ENCODE measurements at regions of chr6 and their contacts with region 1.

Region 1: GRCh38 chr6:158026054-158026900 is 44.6 kb downstream of the SYNJ2 start:
- DNase-seq: peak; percentile 64 to 92 (median 80)
- ATAC-seq: peak; percentile 77
- H3K4me3 ChIP-seq: peak overlapping the region; percentile 24 to 42
- H3K4me3 Mint-ChIP-seq: peak overlapping the region; percentile 81
- H3K27ac ChIP-seq: peak overlapping the region; percentile 65 to 91
- H3K27ac Mint-ChIP-seq: peak overlapping the region; percentile 97
- H3K4me1 ChIP-seq: peaks cover 27% of the 10 kb centered on the region
- H3K4me1 Mint-ChIP-seq: peaks cover 36% of the 10 kb centered on the region
- H3K27me3 ChIP-seq: no peaks in the 10 kb centered on the region
- H3K27me3 Mint-ChIP-seq: no peaks in the 10 kb centered on the region
- CTCF ChIP-seq: peak; percentile 75

Region 2: GRCh38 chr6:157764178-157765033 is 261.9 kb before region 1 on chr6:
- CTCF ChIA-PET with region 1: no interaction called
- POLR2A ChIA-PET with region 1: no interaction called
- intact Hi-C with region 1: loop called (anchors 1 to 5 kb)
- DNase-seq: peak; percentile 57 to 93 (median 80)
- ATAC-seq: peak; percentile 51
- H3K4me3 ChIP-seq: peak overlapping the region; percentile 10 to 23
- H3K4me3 Mint-ChIP-seq: peak overlapping the region; percentile 74
- H3K27ac ChIP-seq: peak overlapping the region; percentile 27 to 61
- H3K27ac Mint-ChIP-seq: peak overlapping the region; percentile 95
- H3K4me1 ChIP-seq: peaks cover 69% of the 10 kb centered on the region
- H3K4me1 Mint-ChIP-seq: peaks cover 73% of the 10 kb centered on the region
- H3K27me3 ChIP-seq: no peaks in the 10 kb centered on the region
- H3K27me3 Mint-ChIP-seq: no peaks in the 10 kb centered on the region
- CTCF ChIP-seq: no peak

Region 3: DNA sequence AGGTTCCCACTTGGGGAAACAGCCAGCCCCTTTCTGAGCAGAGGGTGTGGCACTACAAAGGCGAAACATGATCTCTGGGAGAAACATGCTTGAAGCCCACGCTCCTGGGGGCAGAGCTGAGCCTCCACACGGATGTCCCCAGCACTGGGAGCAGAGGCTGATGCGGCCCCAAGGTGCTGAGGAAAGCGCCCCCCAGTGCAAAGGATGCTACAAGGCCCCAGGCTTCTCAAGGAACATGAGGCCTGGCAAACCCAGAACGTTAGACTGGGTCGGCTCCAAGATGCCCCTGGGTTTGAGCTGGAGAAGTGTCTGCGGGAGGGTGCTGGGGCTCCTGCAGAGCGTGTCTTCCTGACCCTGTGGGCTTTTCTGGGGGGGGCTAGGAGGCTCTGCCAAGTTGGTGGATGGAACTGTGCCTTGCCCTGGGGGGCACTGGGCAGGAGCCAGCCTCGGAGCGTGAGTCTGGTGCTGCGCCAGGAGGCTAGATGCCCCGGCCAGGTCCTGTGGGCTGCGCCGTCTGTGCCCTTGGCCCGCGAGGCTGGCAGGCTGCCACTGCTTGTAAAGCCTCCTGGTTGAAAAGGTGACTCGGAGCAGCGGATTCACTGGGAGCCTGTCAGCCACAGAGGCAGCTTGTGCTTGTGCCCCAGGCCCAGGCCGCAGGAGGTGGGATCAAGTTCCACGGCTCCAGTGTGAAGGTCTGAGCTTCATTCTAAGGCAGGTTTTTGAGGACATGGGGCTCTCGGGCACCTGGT is 36.6 kb before region 1 on chr6:
- CTCF ChIA-PET with region 1: interaction called, 23 read pairs
- POLR2A ChIA-PET with region 1: no interaction called
- intact Hi-C with region 1: loop called in 1 of 2 experiments (anchors 2 kb)
- DNase-seq: no peak
- ATAC-seq: peak; percentile 15
- H3K4me3 ChIP-seq: peak overlapping the region in 1 of 2 experiments; percentile 38
- H3K4me3 Mint-ChIP-seq: peak overlapping the region; percentile 81
- H3K27ac ChIP-seq: peak overlapping the region; percentile 9 to 20
- H3K27ac Mint-ChIP-seq: peak overlapping the region; percentile 88
- H3K4me1 ChIP-seq: peaks cover 47% of the 10 kb centered on the region
- H3K4me1 Mint-ChIP-seq: peaks cover 53% of the 10 kb centered on the region
- H3K27me3 ChIP-seq: no peaks in the 10 kb centered on the region
- H3K27me3 Mint-ChIP-seq: no peaks in the 10 kb centered on the region
- CTCF ChIP-seq: no peak

Region 4: GRCh38 chr6:158040051-158040803 is 13.9 kb after region 1 on chr6:
- CTCF ChIA-PET with region 1: interaction called, 11 read pairs
- POLR2A ChIA-PET with region 1: interaction called, 4 read pairs
- intact Hi-C with region 1: no loop called
- DNase-seq: no peak
- ATAC-seq: no peak
- H3K4me3 ChIP-seq: no peak overlapping the region
- H3K4me3 Mint-ChIP-seq: no peak overlapping the region
- H3K27ac ChIP-seq: no peak overlapping the region
- H3K27ac Mint-ChIP-seq: no peak overlapping the region
- H3K4me1 ChIP-seq: peaks cover 6% of the 10 kb centered on the region
- H3K4me1 Mint-ChIP-seq: peaks cover 13% of the 10 kb centered on the region
- H3K27me3 ChIP-seq: no peaks in the 10 kb centered on the region
- H3K27me3 Mint-ChIP-seq: no peaks in the 10 kb centered on the region
- CTCF ChIP-seq: no peak

Region 5: GRCh38 chr6:158072083-158072721 is 45.9 kb after region 1 on chr6:
- CTCF ChIA-PET with region 1: interaction called, 51 read pairs
- POLR2A ChIA-PET with region 1: interaction called, 12 read pairs
- intact Hi-C with region 1: loop called (anchors 1 to 5 kb)
- DNase-seq: peak; percentile 35 to 81 (median 62)
- ATAC-seq: peak; percentile 80
- H3K4me3 ChIP-seq: no peak overlapping the region
- H3K4me3 Mint-ChIP-seq: no peak overlapping the region
- H3K27ac ChIP-seq: no peak overlapping the region
- H3K27ac Mint-ChIP-seq: no peak overlapping the region
- H3K4me1 ChIP-seq: peaks cover 8% of the 10 kb centered on the region
- H3K4me1 Mint-ChIP-seq: peaks cover 6% of the 10 kb centered on the region
- H3K27me3 ChIP-seq: no peaks in the 10 kb centered on the region
- H3K27me3 Mint-ChIP-seq: no peaks in the 10 kb centered on the region
- CTCF ChIP-seq: peak; percentile 80